WTC11 (cell line): ENCODE measurements at regions of chr6 and their contacts with region 1.

Region 1: GRCh38 chr6:42104095-42104806 is 38.2 kb downstream of the C6orf132 start:
- DNase-seq: peak; percentile 85
- ATAC-seq: peak; percentile 72
- H3K4me3 Mint-ChIP-seq: peak overlapping the region; percentile 51
- H3K27ac Mint-ChIP-seq: peak overlapping the region; percentile 57
- H3K4me1 Mint-ChIP-seq: peaks cover 25% of the 10 kb centered on the region
- H3K27me3 Mint-ChIP-seq: peaks cover 9% of the 10 kb centered on the region
- CTCF ChIP-seq: peak; percentile 91

Region 2: DNA sequence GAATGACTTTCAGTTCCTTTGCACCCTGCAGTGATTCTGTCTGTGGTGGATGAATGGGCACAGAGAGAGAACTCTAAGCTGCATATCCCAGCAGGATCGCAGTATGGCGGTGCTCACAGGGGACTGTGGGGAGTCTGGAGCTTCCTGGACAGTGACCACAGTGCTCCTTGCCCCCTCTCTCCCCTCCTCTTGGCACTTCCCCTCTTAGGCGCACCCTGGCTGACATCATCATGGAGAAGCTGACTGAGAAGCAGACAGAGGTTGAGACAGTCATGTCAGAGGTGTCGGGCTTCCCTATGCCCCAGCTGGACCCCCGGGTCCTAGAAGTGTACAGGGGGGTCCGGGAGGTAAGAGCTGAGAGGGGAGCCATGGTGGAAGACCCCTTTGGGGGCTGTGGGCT is 174.3 kb before region 1 on chr6:
- CTCF ChIA-PET with region 1: no interaction called
- POLR2A ChIA-PET with region 1: no interaction called
- DNase-seq: no peak
- ATAC-seq: no peak
- H3K4me3 Mint-ChIP-seq: no peak overlapping the region
- H3K27ac Mint-ChIP-seq: no peak overlapping the region
- H3K4me1 Mint-ChIP-seq: no peaks in the 10 kb centered on the region
- H3K27me3 Mint-ChIP-seq: no peaks in the 10 kb centered on the region
- CTCF ChIP-seq: no peak

Region 3: DNA sequence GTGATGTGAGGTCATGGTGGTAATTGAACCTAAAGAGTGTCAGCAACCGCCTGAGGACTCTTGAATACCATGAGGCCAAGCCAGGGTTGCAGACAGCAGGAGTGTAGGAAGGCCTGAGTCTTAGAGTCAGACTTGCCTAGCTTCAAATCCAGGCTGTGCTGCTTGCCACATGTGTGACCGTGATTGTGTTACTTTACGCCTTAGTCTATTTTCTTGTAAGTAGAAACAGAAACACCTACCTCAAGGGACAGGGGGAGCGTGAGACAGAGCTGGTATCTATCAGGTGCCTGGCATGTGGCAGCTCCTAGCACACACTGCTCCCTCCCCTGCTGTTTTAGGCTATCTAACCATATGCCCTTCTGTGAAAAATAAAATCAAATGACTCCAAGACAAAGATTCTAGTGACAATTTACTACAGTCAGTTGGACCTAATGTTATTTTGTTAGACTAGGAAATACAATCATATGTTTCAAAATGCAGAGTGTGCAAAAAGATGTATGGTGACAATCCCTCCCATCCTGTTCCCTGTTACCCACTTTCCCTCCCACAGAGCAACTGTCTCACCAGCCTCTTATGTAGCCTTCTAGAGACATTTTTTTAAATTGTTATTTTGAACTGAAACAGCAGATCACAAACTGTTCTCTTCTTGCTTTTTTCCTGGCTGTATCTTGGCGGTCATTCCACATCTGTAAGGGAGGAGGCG is 32.2 kb before region 1 on chr6:
- CTCF ChIA-PET with region 1: interaction called, 11 read pairs
- POLR2A ChIA-PET with region 1: no interaction called
- DNase-seq: no peak
- ATAC-seq: no peak
- H3K4me3 Mint-ChIP-seq: no peak overlapping the region
- H3K27ac Mint-ChIP-seq: no peak overlapping the region; the same call in 1 of the 2 replicates
- H3K4me1 Mint-ChIP-seq: no peaks in the 10 kb centered on the region
- H3K27me3 Mint-ChIP-seq: no peaks in the 10 kb centered on the region
- CTCF ChIP-seq: no peak

Region 4: GRCh38 chr6:42118162-42119001 is 14.1 kb after region 1 on chr6:
- CTCF ChIA-PET with region 1: interaction called, 10 read pairs
- POLR2A ChIA-PET with region 1: no interaction called
- DNase-seq: no peak
- ATAC-seq: no peak
- H3K4me3 Mint-ChIP-seq: no peak overlapping the region
- H3K27ac Mint-ChIP-seq: 0 out of 2 replicates have a peak overlapping the region, but pooled peaks have one; percentile 70
- H3K4me1 Mint-ChIP-seq: no peaks in the 10 kb centered on the region
- H3K27me3 Mint-ChIP-seq: no peaks in the 10 kb centered on the region
- CTCF ChIP-seq: no peak

Region 5: DNA sequence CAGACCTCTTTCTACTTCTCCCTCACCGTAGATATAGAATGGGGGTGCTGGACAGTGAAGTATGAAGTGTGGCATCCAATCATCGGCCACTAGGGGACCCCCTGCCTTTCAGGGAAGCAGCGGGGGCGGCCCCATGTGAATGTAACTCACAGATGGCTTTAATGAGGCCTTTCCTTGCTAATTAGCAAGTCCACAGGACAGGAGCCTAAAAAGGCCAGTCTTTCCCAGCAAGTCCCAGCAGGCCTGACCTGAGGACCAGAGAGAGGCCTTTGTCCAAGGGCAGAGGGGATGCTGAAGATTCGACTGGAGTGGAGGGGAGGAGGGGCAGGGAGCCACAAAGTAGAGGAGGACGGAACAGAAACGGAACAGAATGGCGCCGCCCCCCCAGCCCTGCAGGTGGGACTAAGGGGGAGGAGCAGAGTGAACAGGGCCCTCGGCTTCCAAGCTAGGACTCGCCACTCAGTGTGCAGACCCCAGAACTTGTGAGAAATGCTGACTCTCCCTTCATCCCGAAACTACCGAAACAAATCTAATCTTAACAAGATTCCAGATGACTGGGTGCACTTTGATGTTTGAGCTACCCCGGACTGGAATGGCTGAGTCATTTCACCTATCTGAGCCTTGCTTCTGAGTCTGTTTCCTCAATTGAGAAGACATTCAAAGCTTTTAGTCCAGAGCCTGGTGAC is 32.4 kb after region 1 on chr6:
- CTCF ChIA-PET with region 1: interaction called, 45 read pairs
- POLR2A ChIA-PET with region 1: interaction called, 5 read pairs
- DNase-seq: peak; percentile 87
- ATAC-seq: peak; percentile 81
- H3K4me3 Mint-ChIP-seq: peak overlapping the region; percentile 61
- H3K27ac Mint-ChIP-seq: peak overlapping the region; percentile 100
- H3K4me1 Mint-ChIP-seq: peaks cover 79% of the 10 kb centered on the region
- H3K27me3 Mint-ChIP-seq: no peaks in the 10 kb centered on the region; the same call in 1 of the 2 replicates
- CTCF ChIP-seq: no peak; the same call in 1 of the 2 replicates

Region 6: DNA sequence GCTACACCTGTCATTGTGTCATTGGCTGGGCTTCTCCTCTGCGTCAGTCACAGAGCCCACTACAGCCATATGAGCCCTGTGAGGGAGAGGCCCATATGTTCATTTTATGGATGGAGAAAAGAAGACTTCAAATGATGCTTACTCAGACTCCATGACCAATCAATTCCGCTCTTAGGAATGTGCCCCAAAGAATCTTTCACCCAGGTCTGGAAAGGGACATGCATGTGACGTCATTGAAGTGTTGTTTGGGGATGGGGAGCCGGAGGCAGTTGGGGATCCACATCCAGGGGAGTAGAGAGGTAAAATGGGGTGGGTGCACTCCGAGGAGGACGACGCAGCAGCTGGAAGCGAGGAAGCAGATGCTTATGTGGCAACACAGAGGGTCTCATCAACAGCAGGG is 47.8 kb after region 1 on chr6:
- CTCF ChIA-PET with region 1: interaction called, 14 read pairs
- POLR2A ChIA-PET with region 1: no interaction called
- DNase-seq: no peak
- ATAC-seq: no peak
- H3K4me3 Mint-ChIP-seq: no peak overlapping the region
- H3K27ac Mint-ChIP-seq: peak overlapping the region; percentile 10; the same call in 1 of the 2 replicates
- H3K4me1 Mint-ChIP-seq: peaks cover 25% of the 10 kb centered on the region
- H3K27me3 Mint-ChIP-seq: peaks cover 19% of the 10 kb centered on the region
- CTCF ChIP-seq: no peak

Region 7: DNA sequence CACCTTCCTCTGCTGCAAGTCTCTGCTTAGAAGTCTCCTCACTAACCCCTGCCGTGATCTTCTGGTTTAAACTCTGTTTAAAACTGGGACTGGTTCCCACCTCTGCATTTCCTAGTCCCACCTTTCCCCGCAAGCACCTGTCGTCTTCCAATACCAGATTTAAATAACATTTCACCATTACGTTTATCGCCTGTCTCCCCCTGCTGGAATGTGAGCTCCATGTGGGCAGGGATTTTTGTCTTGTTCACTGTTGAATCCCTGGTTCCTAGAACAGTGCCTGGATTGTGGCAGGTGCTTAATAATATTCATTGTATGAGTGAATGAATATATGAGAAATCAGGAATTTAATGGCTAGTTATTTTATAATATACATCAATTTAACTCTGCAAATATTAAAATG is 71.6 kb after region 1 on chr6:
- CTCF ChIA-PET with region 1: interaction called, 17 read pairs
- POLR2A ChIA-PET with region 1: no interaction called
- DNase-seq: peak; percentile 42
- ATAC-seq: peak; percentile 6; the same call in 1 of the 2 replicates
- H3K4me3 Mint-ChIP-seq: no peak overlapping the region
- H3K27ac Mint-ChIP-seq: peak overlapping the region; percentile 8; the same call in 1 of the 2 replicates
- H3K4me1 Mint-ChIP-seq: peaks cover 44% of the 10 kb centered on the region
- H3K27me3 Mint-ChIP-seq: peaks cover 5% of the 10 kb centered on the region
- CTCF ChIP-seq: 0 out of 2 replicates have a peak, but pooled peaks have one; percentile 16

Region 8: DNA sequence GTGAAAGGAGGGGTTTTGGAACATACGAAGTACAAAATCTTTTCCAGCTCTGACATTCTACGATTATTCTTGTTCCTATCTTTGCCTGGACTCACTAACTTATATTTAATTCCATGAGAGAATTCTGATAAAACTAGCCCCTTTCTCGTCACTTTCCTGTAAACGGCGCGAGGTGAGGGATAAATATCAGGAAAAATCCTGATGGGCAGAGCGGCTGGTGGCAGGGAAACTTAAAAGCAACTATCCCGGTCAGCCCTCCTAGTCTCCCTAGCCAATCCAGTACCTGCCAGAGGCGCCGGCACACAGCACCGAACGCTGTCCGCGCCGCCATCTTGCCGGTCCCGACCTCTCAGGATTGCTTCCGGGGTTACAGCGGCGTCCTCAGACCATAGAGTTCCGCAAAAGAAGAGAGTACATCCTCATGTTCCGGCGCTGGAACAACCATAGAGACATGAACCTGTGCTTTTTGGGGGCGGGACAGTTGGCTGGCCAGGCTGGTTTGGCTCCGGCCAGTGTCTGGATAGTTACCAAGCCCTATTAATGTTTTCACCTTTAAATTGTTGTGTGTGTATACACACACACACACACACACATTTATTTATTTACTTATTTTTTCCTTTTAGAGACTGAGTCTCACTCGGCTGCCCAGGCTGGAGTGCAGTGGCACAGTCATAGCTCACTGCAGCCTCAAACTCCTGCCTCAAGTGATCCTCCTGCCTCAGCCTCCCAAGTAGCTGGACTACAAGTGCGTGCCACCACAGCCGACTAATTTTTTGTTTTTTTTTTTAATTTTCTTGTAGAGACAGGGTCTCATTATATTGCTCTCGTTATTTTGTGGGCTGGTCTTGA is 113.5 kb after region 1 on chr6 and contains the start of gene MRPS10:
- CTCF ChIA-PET with region 1: interaction called, 35 read pairs
- POLR2A ChIA-PET with region 1: interaction called, 4 read pairs
- DNase-seq: peak; percentile 95
- ATAC-seq: peak; percentile 99
- H3K4me3 Mint-ChIP-seq: peak within 1 kb of the TSS; percentile 100
- H3K27ac Mint-ChIP-seq: peak within 1 kb of the TSS; percentile 100
- H3K4me1 Mint-ChIP-seq: peaks cover 14% of the 10 kb centered on the region
- H3K27me3 Mint-ChIP-seq: no peaks in the 10 kb centered on the region
- CTCF ChIP-seq: no peak
- total RNA-seq, gene MRPS10: 30.7 to 32.9 TPM (median 31.3 TPM) in 3 replicates